ENCODE measurements at regions of chr3 and their contacts with region 1.

Region 1: GRCh38 chr3:18717598-18717997 is 292.5 kb upstream of the SATB1 start:
- DNase-seq: no peak
- H3K4me3 Mint-ChIP-seq: no peak overlapping the region
- H3K27ac Mint-ChIP-seq: peak overlapping the region; percentile 91
- H3K4me1 Mint-ChIP-seq: peaks cover 73% of the 10 kb centered on the region
- H3K27me3 Mint-ChIP-seq: no peaks in the 10 kb centered on the region

Region 2: DNA sequence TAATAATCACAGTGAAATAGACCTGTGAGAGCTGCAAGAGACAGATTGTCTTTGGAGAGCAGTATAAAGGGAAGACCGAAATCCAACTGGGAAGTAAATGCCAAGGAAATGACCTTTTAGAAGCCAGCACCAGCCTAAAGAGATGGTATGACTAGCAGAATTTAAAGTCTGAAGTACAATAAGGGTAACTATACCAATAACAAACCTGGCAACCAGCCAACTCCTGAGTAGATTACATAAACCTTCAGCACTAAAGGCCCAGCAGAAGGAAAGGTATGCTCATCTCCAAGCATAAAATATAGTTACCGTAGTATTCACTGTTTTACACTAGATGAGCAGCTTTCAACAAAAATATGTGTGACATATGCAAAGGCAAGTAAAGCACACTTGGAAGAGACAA is 137.3 kb before region 1 on chr3:
- CTCF ChIA-PET with region 1: no interaction called
- POLR2A ChIA-PET with region 1: no interaction called
- intact Hi-C with region 1: no loop called
- DNase-seq: no peak
- H3K4me3 Mint-ChIP-seq: no peak overlapping the region
- H3K27ac Mint-ChIP-seq: no peak overlapping the region
- H3K4me1 Mint-ChIP-seq: peaks cover 4% of the 10 kb centered on the region
- H3K27me3 Mint-ChIP-seq: no peaks in the 10 kb centered on the region

Region 3: DNA sequence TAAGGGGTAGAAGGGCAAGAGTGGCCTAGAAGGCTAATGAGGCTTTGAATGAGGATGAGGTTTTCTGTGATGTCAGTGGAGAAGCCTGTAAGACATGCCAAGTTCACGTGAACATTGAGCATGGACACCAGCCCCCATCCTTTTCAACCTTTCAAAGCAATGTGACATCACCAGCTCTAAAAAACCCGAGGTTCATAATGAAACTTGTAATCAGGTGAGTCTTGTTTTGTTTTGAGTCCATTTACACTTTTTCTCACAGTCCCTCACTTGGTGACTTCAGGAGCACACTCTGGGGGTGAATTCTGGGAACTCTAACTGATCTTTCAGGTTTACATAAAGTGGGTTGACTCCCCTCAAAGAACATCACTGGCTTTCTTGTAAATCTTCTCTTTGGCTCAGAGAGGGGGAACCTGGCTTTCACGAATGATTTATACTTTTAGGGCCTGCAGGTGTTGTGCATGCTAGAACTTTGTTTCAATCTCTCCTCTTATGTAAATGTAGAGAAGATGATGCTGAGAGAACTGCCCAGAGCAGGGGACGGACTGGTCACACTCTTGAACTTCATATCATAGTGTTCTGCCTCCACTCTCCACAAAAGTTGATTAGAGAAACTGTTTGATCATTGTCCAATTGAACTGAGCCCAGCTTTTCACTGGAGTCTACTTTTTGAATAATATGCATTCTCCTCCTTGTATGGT is 67.8 kb before region 1 on chr3:
- CTCF ChIA-PET with region 1: interaction called, 6 read pairs
- POLR2A ChIA-PET with region 1: interaction called, 8 read pairs
- intact Hi-C with region 1: loop called (anchors 1 kb)
- DNase-seq: peak; percentile 76
- H3K4me3 Mint-ChIP-seq: peak overlapping the region; percentile 30
- H3K27ac Mint-ChIP-seq: peak overlapping the region; percentile 98
- H3K4me1 Mint-ChIP-seq: peaks cover 89% of the 10 kb centered on the region
- H3K27me3 Mint-ChIP-seq: no peaks in the 10 kb centered on the region

Region 4: DNA sequence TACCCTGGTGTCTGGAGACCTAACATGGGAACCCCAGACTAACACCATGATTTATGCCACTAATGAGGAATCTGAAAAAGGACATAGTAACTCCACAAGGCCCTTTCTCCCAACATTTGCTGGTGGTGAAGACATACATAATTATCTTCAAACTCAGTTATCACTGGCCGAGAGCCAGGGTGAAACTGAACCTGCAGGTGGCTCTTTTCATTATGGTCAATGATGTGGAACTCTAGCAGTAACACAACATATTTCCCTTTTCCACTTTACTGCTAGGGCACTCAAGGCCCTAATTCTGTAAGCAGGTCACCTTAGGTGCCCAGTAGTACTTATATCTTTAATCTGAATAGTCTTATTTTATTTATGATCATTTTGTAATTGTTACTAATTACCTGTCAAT is 33.9 kb after region 1 on chr3:
- CTCF ChIA-PET with region 1: no interaction called
- POLR2A ChIA-PET with region 1: no interaction called
- intact Hi-C with region 1: no loop called
- DNase-seq: no peak
- H3K4me3 Mint-ChIP-seq: no peak overlapping the region
- H3K27ac Mint-ChIP-seq: no peak overlapping the region
- H3K4me1 Mint-ChIP-seq: peaks cover 60% of the 10 kb centered on the region
- H3K27me3 Mint-ChIP-seq: no peaks in the 10 kb centered on the region